ENCODE measurements at regions of chr5 and their contacts with region 1.

Region 1: DNA sequence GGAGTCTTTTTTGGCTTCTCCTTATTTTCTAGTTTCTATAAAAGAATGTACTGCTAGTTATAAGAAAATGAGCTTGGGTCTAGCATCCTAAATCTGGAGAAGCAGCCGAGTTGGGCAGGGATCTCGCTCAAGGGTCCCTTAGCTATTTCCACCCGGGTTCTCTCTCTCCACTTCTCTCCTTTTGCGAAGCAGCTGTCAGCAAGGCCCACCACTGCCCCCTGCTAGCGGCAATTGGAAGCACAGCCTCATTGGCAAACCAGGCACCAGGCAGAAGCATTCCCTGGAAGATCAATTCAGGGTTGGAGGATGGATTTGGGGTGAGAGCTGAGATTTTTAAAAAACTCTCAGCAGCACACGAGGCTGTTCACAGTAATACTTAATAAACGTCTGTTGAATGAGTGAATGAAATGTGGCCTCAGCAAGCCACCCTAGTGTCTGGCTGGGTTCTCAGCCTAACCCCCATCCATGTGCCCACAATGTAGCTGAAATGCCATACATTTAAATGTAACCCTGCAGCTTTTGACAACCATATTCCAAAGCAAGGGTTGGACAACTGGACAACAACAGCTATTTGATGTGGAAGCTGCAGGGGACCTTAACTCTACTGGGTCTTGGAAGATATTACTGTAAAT is 34.6 kb upstream of the TNIP1 start:
- DNase-seq: peak; percentile 45 to 82 (median 76)
- ATAC-seq: peak; percentile 93
- H3K4me3 ChIP-seq: no peak overlapping the region
- H3K4me3 Mint-ChIP-seq: no peak overlapping the region
- H3K27ac ChIP-seq: no peak overlapping the region
- H3K27ac Mint-ChIP-seq: peak overlapping the region; percentile 66
- H3K4me1 ChIP-seq: peaks cover 11% of the 10 kb centered on the region
- H3K4me1 Mint-ChIP-seq: peaks cover 17% of the 10 kb centered on the region
- H3K27me3 ChIP-seq: no peaks in the 10 kb centered on the region
- H3K27me3 Mint-ChIP-seq: no peaks in the 10 kb centered on the region
- CTCF ChIP-seq: peak; percentile 93

Region 2: GRCh38 chr5:150734579-150735384 is 380.6 kb before region 1 on chr5:
- CTCF ChIA-PET with region 1: no interaction called
- POLR2A ChIA-PET with region 1: no interaction called
- intact Hi-C with region 1: no loop called
- DNase-seq: peak in 1 of 9 experiments; percentile 22
- ATAC-seq: no peak
- H3K4me3 ChIP-seq: no peak overlapping the region
- H3K4me3 Mint-ChIP-seq: no peak overlapping the region
- H3K27ac ChIP-seq: no peak overlapping the region
- H3K27ac Mint-ChIP-seq: no peak overlapping the region
- H3K4me1 ChIP-seq: no peaks in the 10 kb centered on the region
- H3K4me1 Mint-ChIP-seq: peaks cover 46% of the 10 kb centered on the region
- H3K27me3 ChIP-seq: no peaks in the 10 kb centered on the region
- H3K27me3 Mint-ChIP-seq: no peaks in the 10 kb centered on the region
- CTCF ChIP-seq: no peak

Region 3: GRCh38 chr5:150801117-150801927 is 314.1 kb before region 1 on chr5:
- CTCF ChIA-PET with region 1: interaction called, 5 read pairs
- POLR2A ChIA-PET with region 1: no interaction called
- intact Hi-C with region 1: loop called (anchors 2 to 5 kb)
- DNase-seq: peak in 2 of 9 experiments; percentile 62 to 71
- ATAC-seq: peak; percentile 54
- H3K4me3 ChIP-seq: no peak overlapping the region
- H3K4me3 Mint-ChIP-seq: no peak overlapping the region
- H3K27ac ChIP-seq: no peak overlapping the region
- H3K27ac Mint-ChIP-seq: no peak overlapping the region
- H3K4me1 ChIP-seq: peaks cover 5% of the 10 kb centered on the region
- H3K4me1 Mint-ChIP-seq: peaks cover 4% of the 10 kb centered on the region
- H3K27me3 ChIP-seq: no peaks in the 10 kb centered on the region
- H3K27me3 Mint-ChIP-seq: peaks cover 4% of the 10 kb centered on the region
- CTCF ChIP-seq: peak; percentile 78

Region 4: GRCh38 chr5:151063142-151063949 is 52.0 kb before region 1 on chr5:
- CTCF ChIA-PET with region 1: interaction called, 514 read pairs
- POLR2A ChIA-PET with region 1: no interaction called
- intact Hi-C with region 1: no loop called
- DNase-seq: no peak
- ATAC-seq: no peak
- H3K4me3 ChIP-seq: no peak overlapping the region
- H3K4me3 Mint-ChIP-seq: no peak overlapping the region
- H3K27ac ChIP-seq: no peak overlapping the region
- H3K27ac Mint-ChIP-seq: peak overlapping the region; percentile 50
- H3K4me1 ChIP-seq: peaks cover 15% of the 10 kb centered on the region
- H3K4me1 Mint-ChIP-seq: peaks cover 45% of the 10 kb centered on the region
- H3K27me3 ChIP-seq: no peaks in the 10 kb centered on the region
- H3K27me3 Mint-ChIP-seq: no peaks in the 10 kb centered on the region
- CTCF ChIP-seq: no peak

Region 5: DNA sequence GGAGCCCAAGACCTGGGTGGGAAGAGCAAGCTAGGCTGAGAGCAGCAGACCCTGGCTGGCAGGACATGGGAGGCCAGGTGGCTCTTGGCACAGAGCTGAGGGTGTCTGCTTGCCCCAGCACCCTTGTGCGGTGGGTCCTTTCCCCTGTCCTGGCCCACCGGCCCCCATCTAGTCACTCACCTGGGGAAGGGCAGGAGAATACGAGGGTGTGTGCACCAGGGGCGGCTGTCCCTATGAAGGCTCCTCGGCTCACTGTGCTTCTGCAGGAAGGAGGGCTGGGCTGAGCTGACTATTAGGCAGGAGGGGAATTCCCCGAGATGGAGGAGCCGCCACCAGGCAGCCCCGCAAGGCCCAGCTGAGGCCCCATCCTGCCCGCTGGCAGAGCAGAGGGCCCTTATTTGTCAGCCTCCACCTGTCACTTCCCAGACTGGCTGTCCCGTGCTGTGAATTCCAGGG is 28.5 kb before region 1 on chr5:
- CTCF ChIA-PET with region 1: interaction called, 121 read pairs
- POLR2A ChIA-PET with region 1: interaction called, 14 read pairs
- intact Hi-C with region 1: loop called (anchors 2 to 5 kb)
- DNase-seq: peak; percentile 29 to 86 (median 62)
- ATAC-seq: peak; percentile 85
- H3K4me3 ChIP-seq: peak overlapping the region in 1 of 2 experiments; percentile 18
- H3K4me3 Mint-ChIP-seq: peak overlapping the region; percentile 72
- H3K27ac ChIP-seq: peak overlapping the region in 1 of 2 experiments; percentile 37
- H3K27ac Mint-ChIP-seq: peak overlapping the region; percentile 78
- H3K4me1 ChIP-seq: peaks cover 18% of the 10 kb centered on the region
- H3K4me1 Mint-ChIP-seq: peaks cover 50% of the 10 kb centered on the region
- H3K27me3 ChIP-seq: no peaks in the 10 kb centered on the region
- H3K27me3 Mint-ChIP-seq: no peaks in the 10 kb centered on the region
- CTCF ChIP-seq: no peak

Region 6: DNA sequence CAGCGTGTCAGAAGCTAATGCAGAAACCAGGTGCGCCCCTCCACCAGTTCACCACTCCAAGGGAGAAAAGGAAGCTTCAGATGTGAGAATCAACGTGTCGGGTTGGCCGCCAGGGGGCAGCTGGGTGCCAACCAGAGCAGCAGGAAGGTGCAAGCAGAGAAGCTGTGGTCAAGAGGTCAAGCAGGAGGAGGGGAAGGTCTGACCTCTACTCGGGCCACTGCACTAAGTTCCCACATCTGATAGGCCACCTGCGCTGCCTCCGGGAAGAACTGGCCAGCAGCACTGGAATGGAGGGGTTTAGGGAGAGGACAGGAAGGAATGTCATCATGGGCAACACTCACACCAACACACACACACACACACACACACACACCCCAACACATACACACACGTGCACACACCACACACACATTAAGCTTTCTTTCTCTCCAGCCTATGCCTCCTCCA is 10.8 kb after region 1 on chr5:
- CTCF ChIA-PET with region 1: interaction called, 142 read pairs
- POLR2A ChIA-PET with region 1: interaction called, 6 read pairs
- intact Hi-C with region 1: no loop called
- DNase-seq: peak; percentile 34 to 82 (median 66)
- ATAC-seq: peak; percentile 37
- H3K4me3 ChIP-seq: no peak overlapping the region
- H3K4me3 Mint-ChIP-seq: no peak overlapping the region
- H3K27ac ChIP-seq: peak overlapping the region; percentile 12 to 54
- H3K27ac Mint-ChIP-seq: peak overlapping the region; percentile 92
- H3K4me1 ChIP-seq: peaks cover 41% of the 10 kb centered on the region
- H3K4me1 Mint-ChIP-seq: peaks cover 54% of the 10 kb centered on the region
- H3K27me3 ChIP-seq: no peaks in the 10 kb centered on the region
- H3K27me3 Mint-ChIP-seq: no peaks in the 10 kb centered on the region
- CTCF ChIP-seq: peak; percentile 78

Region 7: DNA sequence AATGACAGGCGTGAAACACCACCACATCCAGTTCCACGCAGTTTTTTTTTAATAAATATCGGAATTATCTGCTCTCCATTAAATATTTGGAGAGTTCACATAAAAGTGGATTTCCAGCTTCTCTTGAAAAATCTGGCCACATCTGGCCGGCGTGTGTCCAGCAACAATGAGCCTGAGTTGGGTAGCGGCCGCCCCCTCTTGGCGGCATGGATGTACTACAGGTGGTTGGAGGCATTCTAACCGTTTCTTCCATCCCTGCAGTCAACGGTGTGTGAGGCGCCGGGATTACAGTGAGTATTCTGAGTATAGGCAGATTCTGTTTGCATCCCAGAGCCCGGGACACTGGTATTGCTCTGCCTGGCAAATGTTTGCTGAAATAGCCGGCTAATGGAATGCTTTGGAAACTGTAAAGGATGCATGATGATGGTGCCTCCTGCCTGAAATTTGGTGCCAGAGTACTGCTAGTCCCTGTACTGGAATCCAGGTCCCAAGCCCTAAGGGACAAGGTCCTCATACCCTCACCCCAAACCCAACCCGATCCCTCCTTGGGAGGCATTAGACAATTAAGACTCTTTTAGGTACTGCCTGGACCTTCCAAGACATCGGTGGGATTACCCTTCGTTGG is 124.0 kb after region 1 on chr5:
- CTCF ChIA-PET with region 1: interaction called, 48 read pairs
- POLR2A ChIA-PET with region 1: no interaction called
- intact Hi-C with region 1: no loop called
- DNase-seq: peak in 8 of 9 experiments; percentile 38 to 77 (median 63)
- ATAC-seq: peak; percentile 87
- H3K4me3 ChIP-seq: no peak overlapping the region
- H3K4me3 Mint-ChIP-seq: peak overlapping the region; percentile 57
- H3K27ac ChIP-seq: no peak overlapping the region
- H3K27ac Mint-ChIP-seq: no peak overlapping the region
- H3K4me1 ChIP-seq: peaks cover 23% of the 10 kb centered on the region
- H3K4me1 Mint-ChIP-seq: peaks cover 38% of the 10 kb centered on the region
- H3K27me3 ChIP-seq: no peaks in the 10 kb centered on the region
- H3K27me3 Mint-ChIP-seq: no peaks in the 10 kb centered on the region
- CTCF ChIP-seq: peak; percentile 100